Activated CD4-positive, alpha-beta T cell treated with anti-CD3 and anti-CD28 coated beads for 36 hours (primary cell): ENCODE measurements at regions of chr17 and their contacts with region 1.

Region 1: DNA sequence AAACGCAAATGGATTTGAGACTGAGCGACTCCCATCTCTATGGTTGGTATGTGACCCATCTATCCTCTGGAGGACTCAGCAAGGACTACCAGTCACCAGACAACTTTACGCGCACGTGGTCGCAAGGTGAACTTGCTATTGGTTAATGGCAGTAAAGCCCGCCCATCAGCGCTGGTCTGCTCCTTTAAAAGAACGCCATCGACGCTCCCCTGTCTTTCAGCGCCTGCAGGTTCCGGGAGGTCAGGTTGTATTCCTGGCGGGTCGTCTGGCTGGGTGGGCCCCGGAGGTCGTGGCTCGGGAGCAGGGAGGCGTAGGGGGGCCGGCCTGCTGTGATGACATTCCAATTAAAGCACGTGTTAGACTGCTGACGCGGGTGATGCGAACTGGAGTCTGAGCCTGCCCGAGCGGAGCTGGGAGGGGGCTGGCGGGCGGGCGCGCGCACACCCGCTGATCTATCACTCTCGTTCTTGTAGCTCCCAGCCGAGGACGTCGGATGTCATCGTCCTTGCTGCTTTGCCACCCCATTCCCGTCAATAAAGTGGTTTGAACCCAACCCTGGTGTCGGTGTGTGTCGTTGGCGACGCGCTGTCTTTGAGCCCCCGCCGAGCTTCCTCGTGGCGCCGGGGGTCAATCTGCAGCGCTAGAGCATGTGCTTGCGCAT is 15.9 kb upstream of the ERN1 start:
- DNase-seq: peak; percentile 97
- ATAC-seq: peak; percentile 96
- H3K4me3 Mint-ChIP-seq: no peak overlapping the region
- H3K27ac Mint-ChIP-seq: no peak overlapping the region
- H3K4me1 Mint-ChIP-seq: peaks cover 24% of the 10 kb centered on the region
- H3K27me3 Mint-ChIP-seq: no peaks in the 10 kb centered on the region

Region 2: DNA sequence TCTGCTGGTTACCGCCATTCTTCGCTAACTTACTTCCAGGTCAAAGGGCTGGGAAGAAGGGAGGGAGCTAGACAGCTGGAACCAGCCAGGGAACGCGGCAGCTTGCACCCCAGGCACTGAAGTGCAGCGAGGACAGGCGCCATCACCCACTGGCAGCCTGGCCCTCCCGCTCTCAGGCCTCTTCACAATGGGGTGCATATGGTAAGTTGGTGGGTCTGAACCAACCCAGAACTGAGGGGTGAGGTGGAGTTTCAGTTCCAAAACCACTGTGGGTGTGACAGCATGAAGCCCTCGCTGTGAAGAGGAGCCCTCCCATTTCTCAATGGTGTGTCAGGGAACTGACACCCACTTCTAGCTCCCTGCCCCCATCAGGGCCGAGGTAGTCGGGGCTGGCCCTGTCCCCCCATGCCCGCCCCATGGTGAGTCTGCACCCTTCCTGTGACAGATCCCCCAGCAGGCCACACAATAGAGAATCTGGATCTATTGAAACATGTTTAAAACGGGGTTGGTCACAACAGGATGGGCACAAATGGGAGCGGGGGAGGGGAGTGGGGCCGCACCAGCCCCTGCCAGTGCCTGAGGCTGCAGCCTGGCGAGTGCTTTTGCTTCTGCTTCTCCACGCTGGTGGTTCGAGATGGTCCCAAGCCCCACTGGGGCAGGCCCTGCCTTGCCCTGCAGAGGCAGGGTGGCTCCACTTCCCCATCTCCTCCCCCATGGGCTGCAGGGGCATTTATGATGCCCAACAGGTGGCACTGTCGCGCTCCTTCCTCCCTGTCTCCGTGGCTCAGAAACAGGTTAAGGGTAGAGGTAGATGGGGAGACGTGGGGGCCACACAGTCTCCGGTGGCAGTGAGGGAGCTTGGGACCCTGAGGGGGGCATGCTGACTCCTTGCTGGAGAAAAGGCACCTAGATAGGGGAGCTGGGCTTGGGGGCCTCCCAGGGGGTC is 448.3 kb before region 1 on chr17:
- CTCF ChIA-PET with region 1: no interaction called
- POLR2A ChIA-PET with region 1: no interaction called
- intact Hi-C with region 1: loop called in 1 of 2 experiments (anchors 1 kb)
- DNase-seq: peak; percentile 90
- ATAC-seq: peak; percentile 42
- H3K4me3 Mint-ChIP-seq: peak overlapping the region; percentile 79
- H3K27ac Mint-ChIP-seq: peak overlapping the region; percentile 88
- H3K4me1 Mint-ChIP-seq: peaks cover 64% of the 10 kb centered on the region
- H3K27me3 Mint-ChIP-seq: no peaks in the 10 kb centered on the region

Region 3: GRCh38 chr17:63848834-63849700 is 296.8 kb before region 1 on chr17:
- CTCF ChIA-PET with region 1: interaction called, 3 read pairs
- POLR2A ChIA-PET with region 1: no interaction called
- intact Hi-C with region 1: loop called in 1 of 2 experiments (anchors 2 kb)
- DNase-seq: peak; percentile 99
- ATAC-seq: peak; percentile 95
- H3K4me3 Mint-ChIP-seq: peak overlapping the region; percentile 43
- H3K27ac Mint-ChIP-seq: peak overlapping the region; percentile 93
- H3K4me1 Mint-ChIP-seq: peaks cover 20% of the 10 kb centered on the region
- H3K27me3 Mint-ChIP-seq: no peaks in the 10 kb centered on the region

Region 4: DNA sequence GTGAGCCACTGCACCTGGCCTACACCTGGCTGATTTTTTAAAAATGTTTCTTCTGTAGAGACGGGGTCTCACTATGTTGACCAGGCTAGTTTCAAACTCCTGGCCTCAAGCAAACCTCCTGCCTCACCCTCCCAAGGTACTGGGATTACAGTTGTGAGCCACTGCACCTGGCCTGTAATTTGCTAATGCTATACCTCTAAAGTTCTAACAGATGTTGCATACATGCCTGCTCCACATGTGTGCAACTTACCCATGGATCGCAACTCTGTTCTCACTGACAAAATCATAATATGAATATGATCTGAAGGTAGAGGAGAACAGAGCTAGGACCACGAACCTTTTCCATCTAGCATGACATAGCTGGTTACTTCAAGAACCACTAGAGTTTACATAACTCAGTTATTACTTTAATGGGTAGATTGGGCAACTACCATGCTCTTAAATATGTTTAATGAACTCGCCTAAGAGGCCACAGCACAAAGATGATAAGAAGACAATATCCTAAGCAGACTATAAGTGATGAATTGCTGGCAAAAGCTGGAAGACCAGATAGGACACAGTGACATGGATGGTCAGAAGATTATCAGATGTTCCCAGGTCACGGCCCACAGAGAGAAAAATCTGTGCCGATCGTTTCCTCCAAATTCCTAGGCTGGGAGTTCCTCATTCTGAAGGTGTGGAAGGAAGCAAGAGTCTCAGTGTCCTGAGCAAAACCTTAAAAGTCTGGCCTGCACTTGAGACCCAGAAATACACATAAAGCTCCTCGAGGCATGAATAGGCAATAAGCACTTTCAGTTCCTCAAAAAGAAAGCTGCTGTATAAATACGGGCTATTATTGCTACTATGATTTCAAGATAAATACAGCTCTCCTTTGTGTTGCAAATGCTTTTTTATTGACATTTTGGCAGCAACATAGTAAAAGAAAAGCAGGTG is 71.8 kb before region 1 on chr17:
- CTCF ChIA-PET with region 1: no interaction called
- POLR2A ChIA-PET with region 1: no interaction called
- intact Hi-C with region 1: no loop called
- DNase-seq: no peak
- ATAC-seq: no peak
- H3K4me3 Mint-ChIP-seq: no peak overlapping the region
- H3K27ac Mint-ChIP-seq: peak overlapping the region; percentile 27
- H3K4me1 Mint-ChIP-seq: peaks cover 24% of the 10 kb centered on the region
- H3K27me3 Mint-ChIP-seq: no peaks in the 10 kb centered on the region

Region 5: DNA sequence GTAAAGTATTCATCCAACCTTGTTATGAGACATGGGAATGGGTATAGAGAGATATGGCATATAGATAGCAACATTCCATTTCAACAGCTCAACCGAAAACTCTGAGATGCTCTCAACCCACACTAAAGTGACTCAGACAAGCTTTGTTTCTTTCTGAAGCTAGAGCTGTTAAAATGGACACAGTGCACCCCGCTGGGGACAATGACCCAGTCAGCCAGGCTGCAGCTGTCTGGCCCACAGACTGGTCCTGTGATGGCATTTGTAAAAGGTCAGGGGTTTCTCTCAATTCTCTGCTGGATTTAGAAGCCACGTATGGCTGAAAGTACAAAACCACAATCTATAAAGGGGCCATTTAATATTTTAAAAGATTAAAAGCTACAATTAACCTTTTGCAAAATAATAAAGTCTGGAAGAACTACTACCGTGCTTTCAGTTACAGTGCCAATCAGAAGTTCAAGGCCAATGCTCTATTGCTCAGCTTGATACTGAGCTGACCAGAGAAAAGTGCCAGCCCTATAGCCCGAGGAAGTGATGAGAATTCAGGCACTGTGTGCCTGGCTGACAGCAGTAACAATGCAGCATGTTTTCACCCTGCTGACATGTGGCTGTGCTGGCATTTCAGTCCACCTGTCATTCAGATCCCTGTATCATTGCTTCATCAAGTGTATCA is 56.9 kb after region 1 on chr17:
- CTCF ChIA-PET with region 1: interaction called, 3 read pairs
- POLR2A ChIA-PET with region 1: interaction called, 3 read pairs
- intact Hi-C with region 1: loop called in 1 of 2 experiments (anchors 5 kb)
- DNase-seq: peak; percentile 28
- ATAC-seq: peak; percentile 42
- H3K4me3 Mint-ChIP-seq: no peak overlapping the region
- H3K27ac Mint-ChIP-seq: no peak overlapping the region
- H3K4me1 Mint-ChIP-seq: peaks cover 42% of the 10 kb centered on the region
- H3K27me3 Mint-ChIP-seq: no peaks in the 10 kb centered on the region

Region 6: DNA sequence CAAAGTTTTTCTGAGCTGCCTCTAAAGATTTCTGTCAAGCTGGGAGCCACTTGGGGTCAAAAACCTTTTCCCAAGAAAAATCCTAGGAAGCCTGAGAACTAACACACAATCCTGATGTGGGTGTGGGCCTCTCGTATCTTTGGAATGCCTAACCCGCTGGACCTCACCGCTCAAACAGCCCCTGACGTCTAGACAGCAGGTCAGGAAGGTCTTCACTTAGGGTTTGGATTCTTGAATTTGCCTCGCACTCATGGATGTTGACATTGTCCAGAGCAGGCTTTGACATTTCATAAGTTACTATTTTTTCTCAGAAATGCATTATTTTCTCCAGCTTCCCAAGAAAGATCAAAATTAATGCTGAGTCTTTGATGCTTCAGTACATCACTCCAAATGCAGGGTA is 98.3 kb after region 1 on chr17:
- CTCF ChIA-PET with region 1: no interaction called
- POLR2A ChIA-PET with region 1: no interaction called
- intact Hi-C with region 1: no loop called
- DNase-seq: no peak
- ATAC-seq: no peak
- H3K4me3 Mint-ChIP-seq: no peak overlapping the region
- H3K27ac Mint-ChIP-seq: no peak overlapping the region
- H3K4me1 Mint-ChIP-seq: peaks cover 22% of the 10 kb centered on the region
- H3K27me3 Mint-ChIP-seq: no peaks in the 10 kb centered on the region

Region 7: DNA sequence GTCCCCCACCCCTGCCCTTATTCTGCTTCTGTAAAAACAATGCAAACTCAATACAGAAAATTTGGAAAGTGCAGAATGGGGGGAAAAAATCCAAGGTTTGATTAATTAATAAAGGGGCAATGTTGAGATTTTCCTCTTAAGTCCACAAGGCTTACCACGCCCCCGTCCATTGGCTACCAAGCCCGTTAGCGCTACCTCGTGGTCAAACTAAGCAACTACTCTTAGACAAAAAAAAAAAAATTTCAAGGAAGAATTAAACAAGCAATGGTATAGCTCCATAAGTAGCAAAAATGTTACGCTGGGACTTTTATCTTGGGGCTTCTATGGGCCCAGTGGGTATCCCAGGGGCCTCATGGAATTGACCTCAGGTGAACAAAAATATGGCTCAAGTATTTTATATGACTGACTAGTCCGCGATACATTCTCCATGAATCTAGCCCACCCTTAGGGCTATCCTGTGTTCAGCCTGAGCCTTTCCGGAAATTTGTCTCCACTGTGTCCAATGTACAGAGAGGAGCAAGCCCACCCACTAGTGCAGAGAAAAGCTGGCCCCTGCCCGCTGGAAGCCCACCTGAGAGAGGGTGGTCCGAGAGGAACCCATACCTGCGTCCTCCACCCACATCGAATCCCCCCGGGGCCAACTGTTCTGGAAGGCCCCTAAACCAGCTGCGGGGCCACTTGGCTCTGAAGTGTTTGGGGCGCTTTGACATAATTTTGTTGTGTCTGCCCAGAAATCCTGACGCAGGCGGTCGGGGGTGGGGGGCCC is 136.3 kb after region 1 on chr17:
- CTCF ChIA-PET with region 1: interaction called, 17 read pairs
- POLR2A ChIA-PET with region 1: interaction called, 6 read pairs
- intact Hi-C with region 1: loop called (anchors 1 kb)
- DNase-seq: peak; percentile 76
- ATAC-seq: peak; percentile 51
- H3K4me3 Mint-ChIP-seq: no peak overlapping the region
- H3K27ac Mint-ChIP-seq: no peak overlapping the region
- H3K4me1 Mint-ChIP-seq: no peaks in the 10 kb centered on the region
- H3K27me3 Mint-ChIP-seq: no peaks in the 10 kb centered on the region

Region 8: GRCh38 chr17:64661976-64662773 is 516.3 kb after region 1 on chr17 and contains the start of gene SMURF2:
- CTCF ChIA-PET with region 1: no interaction called
- POLR2A ChIA-PET with region 1: no interaction called
- intact Hi-C with region 1: loop called in 1 of 2 experiments (anchors 5 kb)
- DNase-seq: peak; percentile 89
- ATAC-seq: peak; percentile 82
- H3K4me3 Mint-ChIP-seq: peak within 1 kb of the TSS; percentile 98
- H3K27ac Mint-ChIP-seq: peak within 1 kb of the TSS; percentile 92
- H3K4me1 Mint-ChIP-seq: peaks cover 27% of the 10 kb centered on the region
- H3K27me3 Mint-ChIP-seq: no peaks in the 10 kb centered on the region
- total RNA-seq, gene SMURF2: 13.9 to 15.0 TPM